Caco-2 (cell line): ENCODE measurements at regions of chr9 and their contacts with region 1.

Region 1: DNA sequence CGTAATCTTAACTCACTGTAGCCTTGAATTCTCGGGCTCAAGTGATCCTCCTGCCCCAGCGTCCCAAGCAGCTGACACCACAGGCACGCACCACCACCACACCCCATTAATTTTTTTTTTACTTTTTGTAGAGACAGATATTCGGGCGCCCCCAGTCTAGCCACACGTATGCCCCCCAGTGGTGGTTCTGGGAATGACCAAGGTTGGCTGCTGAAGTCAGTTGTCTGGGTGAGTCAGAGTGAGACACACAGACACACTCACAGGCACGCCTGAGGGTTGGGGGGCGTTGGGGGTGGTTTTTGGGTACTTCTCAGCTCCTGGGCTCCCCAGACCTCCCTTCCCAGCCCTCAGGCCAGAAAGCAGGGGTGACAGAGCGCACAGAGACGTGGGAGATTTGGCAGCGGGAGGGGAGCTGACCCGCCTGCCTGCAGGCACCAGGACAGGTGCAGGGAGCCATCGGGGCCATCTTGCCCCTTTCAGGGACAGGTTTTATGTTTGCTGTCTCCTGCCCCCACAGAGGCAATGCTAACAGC is 4.2 kb upstream of the ENTPD8 start:
- DNase-seq: peak; percentile 83 to 88
- H3K4me3 ChIP-seq: no peak overlapping the region
- H3K4me3 Mint-ChIP-seq: peak overlapping the region; percentile 54
- H3K27ac Mint-ChIP-seq: peak overlapping the region; percentile 19
- H3K4me1 ChIP-seq: peaks cover 13% of the 10 kb centered on the region
- H3K4me1 Mint-ChIP-seq: peaks cover 14% of the 10 kb centered on the region
- H3K27me3 ChIP-seq: no peaks in the 10 kb centered on the region
- H3K27me3 Mint-ChIP-seq: no peaks in the 10 kb centered on the region
- CTCF ChIP-seq: peak; percentile 85 to 91

Region 2: DNA sequence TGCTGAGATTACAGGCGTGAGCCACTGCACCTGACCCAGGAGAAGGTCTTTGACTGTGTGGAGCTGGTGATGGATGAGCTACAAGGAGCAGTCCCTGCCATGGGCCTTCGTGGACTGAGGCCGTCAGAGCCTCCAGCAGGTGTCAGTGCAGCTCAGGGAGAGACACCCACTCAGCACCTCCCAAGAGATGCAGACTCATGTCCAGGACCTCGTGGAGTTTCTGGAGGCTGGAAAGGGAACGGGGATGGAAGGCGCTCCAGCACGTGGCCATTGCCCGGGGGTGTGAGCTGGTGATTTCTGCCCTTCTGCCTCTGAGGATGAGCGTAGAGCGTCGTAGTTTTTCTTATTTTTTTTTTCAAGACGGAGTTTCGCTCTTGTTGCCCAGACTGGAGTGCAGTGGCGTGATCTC is 158.4 kb before region 1 on chr9:
- CTCF ChIA-PET with region 1: interaction called, 14 read pairs
- POLR2A ChIA-PET with region 1: no interaction called
- intact Hi-C with region 1: loop called (anchors 2 kb)
- DNase-seq: peak; percentile 83 to 89
- H3K4me3 ChIP-seq: no peak overlapping the region
- H3K4me3 Mint-ChIP-seq: no peak overlapping the region
- H3K27ac Mint-ChIP-seq: peak overlapping the region; percentile 9
- H3K4me1 ChIP-seq: no peaks in the 10 kb centered on the region
- H3K4me1 Mint-ChIP-seq: no peaks in the 10 kb centered on the region
- H3K27me3 ChIP-seq: no peaks in the 10 kb centered on the region
- H3K27me3 Mint-ChIP-seq: no peaks in the 10 kb centered on the region
- CTCF ChIP-seq: peak; percentile 75 to 84

Region 3: DNA sequence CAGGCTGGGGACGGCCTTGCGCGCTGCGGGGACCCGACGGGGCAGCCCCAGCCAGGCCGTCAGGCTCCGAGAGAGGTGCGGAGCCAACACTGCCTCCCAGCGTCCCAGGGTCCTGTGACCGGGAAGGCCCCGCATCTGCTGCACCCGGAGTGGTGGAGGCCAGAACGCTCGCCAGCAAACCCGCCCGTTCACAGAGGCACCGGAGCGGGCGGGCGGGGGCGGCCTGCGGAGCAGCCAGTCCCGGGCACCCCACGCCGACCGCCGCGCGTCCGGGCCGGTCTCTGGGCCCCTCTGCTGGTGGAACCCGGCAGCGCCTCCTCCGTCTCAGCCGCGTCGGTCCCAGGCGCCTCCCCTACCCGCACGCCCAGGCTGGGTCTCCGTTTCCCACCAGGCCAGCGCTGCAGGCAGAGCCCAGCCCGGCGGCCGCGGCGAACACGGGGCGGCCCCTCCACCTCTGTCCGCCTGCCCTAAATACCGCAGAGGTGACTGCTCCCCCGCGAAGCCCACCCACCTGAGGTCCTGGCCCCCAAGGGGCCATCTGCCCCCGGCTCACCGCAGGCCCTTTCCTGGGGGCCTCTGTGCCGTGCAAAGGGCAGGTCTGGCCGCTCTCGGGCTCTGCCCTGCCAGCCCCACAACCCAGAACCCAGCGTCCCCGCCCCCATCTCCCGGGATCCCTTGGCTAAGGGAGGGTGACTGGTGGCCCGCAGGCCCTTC is 38.3 kb before region 1 on chr9:
- CTCF ChIA-PET with region 1: no interaction called
- POLR2A ChIA-PET with region 1: no interaction called
- intact Hi-C with region 1: no loop called
- DNase-seq: peak in 1 of 2 experiments; percentile 53
- H3K4me3 ChIP-seq: peak overlapping the region; percentile 19; the same call in 1 of the 2 replicates
- H3K4me3 Mint-ChIP-seq: no peak overlapping the region
- H3K27ac Mint-ChIP-seq: no peak overlapping the region
- H3K4me1 ChIP-seq: no peaks in the 10 kb centered on the region
- H3K4me1 Mint-ChIP-seq: no peaks in the 10 kb centered on the region
- H3K27me3 ChIP-seq: no peaks in the 10 kb centered on the region
- H3K27me3 Mint-ChIP-seq: no peaks in the 10 kb centered on the region
- CTCF ChIP-seq: peak; percentile 22 to 38

Region 4: GRCh38 chr9:137423004-137423874 is 22.1 kb before region 1 on chr9 and contains the starts of genes EXD3 and NOXA1:
- CTCF ChIA-PET with region 1: interaction called, 40 read pairs
- POLR2A ChIA-PET with region 1: interaction called, 8 read pairs
- intact Hi-C with region 1: loop called (anchors 1 kb)
- DNase-seq: peak; percentile 94 to 97
- H3K4me3 ChIP-seq: peak within 1 kb of the TSS; percentile 73
- H3K4me3 Mint-ChIP-seq: peak within 1 kb of the TSS; percentile 78
- H3K27ac Mint-ChIP-seq: peak within 1 kb of the TSS; percentile 58
- H3K4me1 ChIP-seq: peaks cover 16% of the 10 kb centered on the region
- H3K4me1 Mint-ChIP-seq: peaks cover 6% of the 10 kb centered on the region
- H3K27me3 ChIP-seq: no peaks in the 10 kb centered on the region
- H3K27me3 Mint-ChIP-seq: no peaks in the 10 kb centered on the region
- CTCF ChIP-seq: peak; percentile 64 to 67
- total RNA-seq, gene EXD3: 10.9 and 11.2 TPM in 2 replicates
- total RNA-seq, gene NOXA1: 7.3 and 8.6 TPM in 2 replicates

Region 5: DNA sequence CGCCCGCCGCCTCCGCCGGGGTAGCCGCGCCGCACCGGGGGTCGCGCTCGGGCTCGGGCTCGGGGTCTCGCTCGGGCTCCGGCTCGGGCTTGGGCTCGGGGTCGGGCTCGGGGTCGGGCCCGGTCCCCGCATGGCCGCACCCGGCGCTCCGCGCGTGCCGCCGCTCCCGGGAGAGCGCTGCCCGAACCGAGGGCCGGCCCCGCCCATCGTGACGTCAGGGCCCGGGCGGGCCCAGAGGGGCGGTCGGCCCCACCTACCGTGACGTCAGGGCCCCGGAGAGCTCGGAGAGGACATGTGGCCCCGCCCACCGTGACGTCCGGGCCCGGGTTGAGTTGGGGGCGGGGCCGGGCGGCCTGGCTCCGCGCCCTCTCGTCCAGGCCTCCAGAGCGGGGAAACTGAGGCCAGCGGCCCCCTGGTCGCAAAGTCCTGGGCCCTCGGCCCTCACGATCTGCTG is 13.8 kb after region 1 on chr9 and contains the start of gene NSMF:
- CTCF ChIA-PET with region 1: interaction called, 5 read pairs
- POLR2A ChIA-PET with region 1: interaction called, 13 read pairs
- intact Hi-C with region 1: no loop called
- DNase-seq: peak; percentile 91 to 97
- H3K4me3 ChIP-seq: peak within 1 kb of the TSS; percentile 89
- H3K4me3 Mint-ChIP-seq: peak within 1 kb of the TSS; percentile 45
- H3K27ac Mint-ChIP-seq: no peak within 1 kb of the TSS
- H3K4me1 ChIP-seq: peaks cover 12% of the 10 kb centered on the region
- H3K4me1 Mint-ChIP-seq: no peaks in the 10 kb centered on the region
- H3K27me3 ChIP-seq: no peaks in the 10 kb centered on the region
- H3K27me3 Mint-ChIP-seq: no peaks in the 10 kb centered on the region
- CTCF ChIP-seq: no peak
- total RNA-seq, gene NSMF: 65.5 and 67.6 TPM in 2 replicates

Region 6: GRCh38 chr9:137605121-137606004 is 160.0 kb after region 1 on chr9 and contains the start of gene ARRDC1:
- CTCF ChIA-PET with region 1: interaction called, 4 read pairs
- POLR2A ChIA-PET with region 1: interaction called, 25 read pairs
- intact Hi-C with region 1: no loop called
- DNase-seq: peak; percentile 95 to 98
- H3K4me3 ChIP-seq: peak within 1 kb of the TSS; percentile 85
- H3K4me3 Mint-ChIP-seq: peak within 1 kb of the TSS; percentile 76
- H3K27ac Mint-ChIP-seq: peak within 1 kb of the TSS; percentile 84
- H3K4me1 ChIP-seq: peaks cover 16% of the 10 kb centered on the region
- H3K4me1 Mint-ChIP-seq: peaks cover 14% of the 10 kb centered on the region
- H3K27me3 ChIP-seq: no peaks in the 10 kb centered on the region
- H3K27me3 Mint-ChIP-seq: no peaks in the 10 kb centered on the region
- CTCF ChIP-seq: no peak
- total RNA-seq, gene ARRDC1: 61.1 and 66.6 TPM in 2 replicates